GM23248 (cell line): ENCODE measurements at regions of chr22 and their contacts with region 1.

Region 1: DNA sequence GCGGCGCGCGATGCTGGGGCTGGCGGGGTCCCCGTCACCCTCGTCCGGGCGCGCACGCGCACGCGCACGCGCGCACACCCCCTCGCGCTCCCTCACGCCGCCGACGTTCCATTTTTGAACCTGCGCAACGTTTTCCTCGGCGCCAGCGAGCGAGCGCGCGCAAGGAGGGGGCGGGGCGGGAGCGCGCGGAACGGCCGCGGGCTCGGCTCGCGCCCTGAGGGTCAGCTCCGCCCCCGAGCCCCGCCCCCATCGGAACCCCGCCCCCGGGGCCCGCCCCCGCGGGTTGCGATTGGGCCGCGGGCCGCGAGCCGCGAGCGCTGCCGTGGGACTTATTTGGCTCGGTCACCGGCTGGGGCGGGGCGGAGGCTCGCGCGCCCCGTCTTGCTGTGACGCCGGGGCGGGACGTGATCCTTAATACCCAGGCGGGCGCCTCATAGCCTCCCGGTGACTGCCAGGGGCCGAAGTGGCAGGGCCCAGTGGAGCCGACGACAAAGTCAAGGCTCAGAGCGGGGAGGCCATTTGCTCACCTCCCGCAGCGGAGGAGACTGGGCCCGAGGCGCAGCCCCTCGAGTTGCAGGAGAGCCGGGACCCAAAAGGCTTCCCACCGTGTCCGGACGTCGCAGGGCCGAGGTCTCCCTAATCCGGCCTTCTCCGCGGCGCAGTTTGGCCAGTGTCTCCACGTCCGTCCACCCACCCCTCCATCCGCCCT is at the start of gene CBX7:
- DNase-seq: peak; percentile 95
- H3K4me3 ChIP-seq: peak within 1 kb of the TSS; percentile 60
- H3K27ac ChIP-seq: no peak within 1 kb of the TSS
- H3K4me1 ChIP-seq: no peaks in the 10 kb centered on the region
- H3K27me3 ChIP-seq: peaks cover 25% of the 10 kb centered on the region
- total RNA-seq, gene CBX7: 3.8 and 10.4 TPM in 2 replicates

Region 2: GRCh38 chr22:39478441-39479264 is 326.0 kb after region 1 on chr22:
- in situ Hi-C with region 1: no loop called
- DNase-seq: peak; percentile 28
- H3K4me3 ChIP-seq: no peak overlapping the region
- H3K27ac ChIP-seq: no peak overlapping the region
- H3K4me1 ChIP-seq: peaks cover 9% of the 10 kb centered on the region; the same call in 1 of the 2 replicates
- H3K27me3 ChIP-seq: no peaks in the 10 kb centered on the region

Region 3: DNA sequence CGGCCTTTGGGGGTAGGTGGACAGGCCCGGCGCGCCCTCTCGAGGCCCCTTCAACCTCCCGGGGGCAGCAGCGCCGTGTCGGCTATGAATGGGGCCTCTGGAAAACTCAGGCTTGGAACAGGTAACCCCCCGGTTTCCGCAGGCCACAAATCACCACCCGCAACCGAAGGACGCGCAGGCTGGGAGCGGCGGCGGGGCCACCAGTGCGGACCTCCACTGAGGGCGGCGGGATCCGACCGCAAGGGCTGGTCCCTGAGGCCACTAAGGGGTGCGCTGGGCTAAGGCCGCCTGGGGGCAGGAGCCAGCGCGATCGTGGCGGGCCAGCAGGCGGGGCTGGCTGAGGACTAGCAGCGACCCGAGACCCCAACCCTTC is 367.0 kb after region 1 on chr22:
- in situ Hi-C with region 1: loop called (anchors 10 kb)
- DNase-seq: peak; percentile 89
- H3K4me3 ChIP-seq: peak overlapping the region; percentile 86
- H3K27ac ChIP-seq: peak overlapping the region; percentile 96
- H3K4me1 ChIP-seq: peaks cover 20% of the 10 kb centered on the region
- H3K27me3 ChIP-seq: no peaks in the 10 kb centered on the region